Naive thymus-derived CD4-positive, alpha-beta T cell (primary cell): ENCODE measurements at regions of chr15 and their contacts with region 1.

Region 1: GRCh38 chr15:44663409-44664308 is at the start of gene SPG11:
- DNase-seq: peak; percentile 81 to 95 (median 94)
- ATAC-seq: peak; percentile 91
- H3K4me3 ChIP-seq: peak within 1 kb of the TSS; percentile 85
- H3K4me3 Mint-ChIP-seq: peak within 1 kb of the TSS; percentile 84 to 99 (median 98)
- H3K27ac ChIP-seq: peak within 1 kb of the TSS; percentile 91
- H3K27ac Mint-ChIP-seq: peak within 1 kb of the TSS; percentile 94 to 99 (median 96)
- H3K4me1 ChIP-seq: peaks cover 35 to 53% of the 10 kb centered on the region in 2 donors
- H3K4me1 Mint-ChIP-seq: peaks cover 41 to 77% (median 69%) of the 10 kb centered on the region in 7 donors
- H3K27me3 ChIP-seq: no peaks in the 10 kb centered on the region
- H3K27me3 Mint-ChIP-seq: no peaks in the 10 kb centered on the region
- total RNA-seq, gene SPG11: 92.2 to 137 (median 131) TPM

Region 2: DNA sequence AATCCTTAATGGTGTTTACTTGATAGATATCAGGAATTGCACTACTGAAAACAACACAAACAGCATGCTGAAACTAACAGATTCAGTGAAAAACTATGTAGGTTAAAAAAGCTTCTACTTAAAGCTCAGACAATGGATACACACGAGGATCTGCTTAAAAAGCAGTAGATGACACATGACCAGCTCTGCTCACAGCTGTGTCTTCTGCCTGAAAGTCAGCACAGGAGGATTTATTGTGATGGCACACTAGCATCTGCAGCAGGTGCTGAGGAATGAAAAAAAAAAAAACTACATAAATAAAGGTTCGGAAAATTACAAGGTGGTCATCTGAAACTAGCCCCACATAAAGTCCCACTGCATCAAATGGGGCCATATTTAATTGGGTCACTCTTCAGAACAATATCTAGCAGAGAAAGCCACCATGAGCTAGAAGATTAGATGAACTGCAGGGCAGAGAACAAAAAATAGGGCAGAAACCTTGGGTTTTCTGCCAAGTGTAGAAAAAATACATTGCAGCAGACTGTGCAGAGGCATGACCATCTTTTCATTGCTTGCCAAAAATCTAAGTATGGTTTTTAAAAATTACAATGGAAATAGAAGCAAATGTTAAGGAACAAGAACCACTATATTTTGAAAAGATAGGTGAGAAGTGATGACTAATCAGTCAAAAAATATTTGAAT is 388.4 kb before region 1 on chr15:
- CTCF ChIA-PET with region 1: no interaction called
- POLR2A ChIA-PET with region 1: no interaction called
- intact Hi-C with region 1: no loop called
- DNase-seq: no peak
- ATAC-seq: no peak
- H3K4me3 ChIP-seq: no peak overlapping the region
- H3K4me3 Mint-ChIP-seq: no peak overlapping the region
- H3K27ac ChIP-seq: no peak overlapping the region
- H3K27ac Mint-ChIP-seq: no peak overlapping the region
- H3K4me1 ChIP-seq: no peaks in the 10 kb centered on the region
- H3K4me1 Mint-ChIP-seq: no peaks in the 10 kb centered on the region
- H3K27me3 ChIP-seq: no peaks in the 10 kb centered on the region
- H3K27me3 Mint-ChIP-seq: peaks cover 0 to 29% (median 9%) of the 10 kb centered on the region in 5 donors

Region 3: GRCh38 chr15:44426975-44427755 is 236.5 kb before region 1 on chr15 and contains the start of gene CTDSPL2:
- CTCF ChIA-PET with region 1: no interaction called
- POLR2A ChIA-PET with region 1: no interaction called
- intact Hi-C with region 1: loop called in 1 of 2 experiments (anchors 10 kb)
- DNase-seq: peak; percentile 87 to 98 (median 94)
- ATAC-seq: peak; percentile 98
- H3K4me3 ChIP-seq: peak within 1 kb of the TSS; percentile 94
- H3K4me3 Mint-ChIP-seq: peak within 1 kb of the TSS; percentile 95 to 99 (median 98)
- H3K27ac ChIP-seq: peak within 1 kb of the TSS; percentile 94
- H3K27ac Mint-ChIP-seq: peak within 1 kb of the TSS; percentile 98 to 100 (median 99)
- H3K4me1 ChIP-seq: peaks cover 10% of the 10 kb centered on the region in 2 donors
- H3K4me1 Mint-ChIP-seq: peaks cover 35 to 65% (median 51%) of the 10 kb centered on the region in 7 donors
- H3K27me3 ChIP-seq: no peaks in the 10 kb centered on the region
- H3K27me3 Mint-ChIP-seq: peaks cover 0 to 2% (median 0%) of the 10 kb centered on the region in 5 donors
- total RNA-seq, gene CTDSPL2: 60.3 to 81.8 (median 77.3) TPM

Region 4: GRCh38 chr15:44584162-44584749 is 79.4 kb before region 1 on chr15:
- CTCF ChIA-PET with region 1: interaction called, 3 read pairs
- POLR2A ChIA-PET with region 1: interaction called, 3 read pairs
- intact Hi-C with region 1: loop called in 1 of 2 experiments (anchors 2 kb)
- DNase-seq: peak; percentile 21 to 56 (median 46)
- ATAC-seq: peak; percentile 89
- H3K4me3 ChIP-seq: no peak overlapping the region
- H3K4me3 Mint-ChIP-seq: no peak overlapping the region
- H3K27ac ChIP-seq: no peak overlapping the region
- H3K27ac Mint-ChIP-seq: peak overlapping the region in 4 of 9 donors; percentile 33 to 70 (median 61)
- H3K4me1 ChIP-seq: peaks cover 0 to 1% of the 10 kb centered on the region in 2 donors
- H3K4me1 Mint-ChIP-seq: peaks cover 3 to 25% (median 18%) of the 10 kb centered on the region in 7 donors
- H3K27me3 ChIP-seq: no peaks in the 10 kb centered on the region
- H3K27me3 Mint-ChIP-seq: no peaks in the 10 kb centered on the region

Region 5: GRCh38 chr15:44633603-44634002 is 30.1 kb before region 1 on chr15:
- CTCF ChIA-PET with region 1: no interaction called
- POLR2A ChIA-PET with region 1: interaction called, 11 read pairs
- intact Hi-C with region 1: no loop called
- DNase-seq: no peak
- ATAC-seq: no peak
- H3K4me3 ChIP-seq: no peak overlapping the region
- H3K4me3 Mint-ChIP-seq: peak overlapping the region in 1 of 10 donors; percentile 51
- H3K27ac ChIP-seq: no peak overlapping the region
- H3K27ac Mint-ChIP-seq: peak overlapping the region in 4 of 9 donors; percentile 48 to 81 (median 56)
- H3K4me1 ChIP-seq: no peaks in the 10 kb centered on the region
- H3K4me1 Mint-ChIP-seq: peaks cover 0 to 11% (median 5%) of the 10 kb centered on the region in 7 donors
- H3K27me3 ChIP-seq: no peaks in the 10 kb centered on the region
- H3K27me3 Mint-ChIP-seq: no peaks in the 10 kb centered on the region

Region 6: DNA sequence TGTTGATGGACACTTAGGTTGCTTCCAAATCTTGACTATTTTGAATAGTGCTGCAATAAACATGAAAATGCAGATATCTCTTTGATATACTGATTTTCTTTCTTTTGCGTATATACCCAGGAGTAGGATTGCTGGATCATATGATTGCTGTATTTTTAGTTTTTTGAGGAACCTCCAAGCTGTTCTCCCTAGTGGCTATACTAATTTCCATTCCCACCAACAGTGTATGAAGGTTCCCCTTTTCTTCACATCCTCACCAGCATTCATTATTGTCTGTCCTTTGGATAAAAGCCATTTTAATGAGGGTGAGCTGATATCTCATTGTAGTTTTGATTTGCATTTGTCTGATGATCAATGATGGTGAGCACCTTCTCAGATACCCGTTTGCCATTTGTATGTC is 35.0 kb after region 1 on chr15:
- CTCF ChIA-PET with region 1: interaction called, 11 read pairs
- POLR2A ChIA-PET with region 1: interaction called, 3,822 read pairs
- intact Hi-C with region 1: no loop called
- DNase-seq: no peak
- ATAC-seq: no peak
- H3K4me3 ChIP-seq: no peak overlapping the region
- H3K4me3 Mint-ChIP-seq: no peak overlapping the region
- H3K27ac ChIP-seq: no peak overlapping the region
- H3K27ac Mint-ChIP-seq: peak overlapping the region in 2 of 9 donors; percentile 7 to 65
- H3K4me1 ChIP-seq: no peaks in the 10 kb centered on the region
- H3K4me1 Mint-ChIP-seq: peaks cover 18 to 49% (median 36%) of the 10 kb centered on the region in 7 donors
- H3K27me3 ChIP-seq: no peaks in the 10 kb centered on the region
- H3K27me3 Mint-ChIP-seq: peaks cover 0 to 20% (median 0%) of the 10 kb centered on the region in 5 donors

Region 7: GRCh38 chr15:44728576-44729407 is 65.1 kb after region 1 on chr15:
- CTCF ChIA-PET with region 1: interaction called, 12 read pairs
- POLR2A ChIA-PET with region 1: interaction called, 3,822 read pairs
- intact Hi-C with region 1: loop called (anchors 1 kb)
- DNase-seq: peak; percentile 75 to 97 (median 96)
- ATAC-seq: peak; percentile 88
- H3K4me3 ChIP-seq: peak overlapping the region; percentile 94
- H3K4me3 Mint-ChIP-seq: peak overlapping the region; percentile 87 to 100 (median 99)
- H3K27ac ChIP-seq: peak overlapping the region; percentile 99
- H3K27ac Mint-ChIP-seq: peak overlapping the region; percentile 98 to 100 (median 100)
- H3K4me1 ChIP-seq: peaks cover 52 to 56% of the 10 kb centered on the region in 2 donors
- H3K4me1 Mint-ChIP-seq: peaks cover 54 to 86% (median 77%) of the 10 kb centered on the region in 7 donors
- H3K27me3 ChIP-seq: no peaks in the 10 kb centered on the region
- H3K27me3 Mint-ChIP-seq: peaks cover 0 to 2% (median 0%) of the 10 kb centered on the region in 5 donors

Region 8: GRCh38 chr15:45157974-45158373 is 494.3 kb after region 1 on chr15:
- CTCF ChIA-PET with region 1: no interaction called
- POLR2A ChIA-PET with region 1: no interaction called
- intact Hi-C with region 1: no loop called
- DNase-seq: no peak
- ATAC-seq: no peak
- H3K4me3 ChIP-seq: no peak overlapping the region
- H3K4me3 Mint-ChIP-seq: peak overlapping the region in 2 of 10 donors; percentile 18 to 41
- H3K27ac ChIP-seq: no peak overlapping the region
- H3K27ac Mint-ChIP-seq: no peak overlapping the region
- H3K4me1 ChIP-seq: no peaks in the 10 kb centered on the region
- H3K4me1 Mint-ChIP-seq: peaks cover 0 to 14% (median 11%) of the 10 kb centered on the region in 7 donors
- H3K27me3 ChIP-seq: no peaks in the 10 kb centered on the region
- H3K27me3 Mint-ChIP-seq: no peaks in the 10 kb centered on the region